ENCODE measurements at regions of chr4 and their contacts with region 1.

Region 1: DNA sequence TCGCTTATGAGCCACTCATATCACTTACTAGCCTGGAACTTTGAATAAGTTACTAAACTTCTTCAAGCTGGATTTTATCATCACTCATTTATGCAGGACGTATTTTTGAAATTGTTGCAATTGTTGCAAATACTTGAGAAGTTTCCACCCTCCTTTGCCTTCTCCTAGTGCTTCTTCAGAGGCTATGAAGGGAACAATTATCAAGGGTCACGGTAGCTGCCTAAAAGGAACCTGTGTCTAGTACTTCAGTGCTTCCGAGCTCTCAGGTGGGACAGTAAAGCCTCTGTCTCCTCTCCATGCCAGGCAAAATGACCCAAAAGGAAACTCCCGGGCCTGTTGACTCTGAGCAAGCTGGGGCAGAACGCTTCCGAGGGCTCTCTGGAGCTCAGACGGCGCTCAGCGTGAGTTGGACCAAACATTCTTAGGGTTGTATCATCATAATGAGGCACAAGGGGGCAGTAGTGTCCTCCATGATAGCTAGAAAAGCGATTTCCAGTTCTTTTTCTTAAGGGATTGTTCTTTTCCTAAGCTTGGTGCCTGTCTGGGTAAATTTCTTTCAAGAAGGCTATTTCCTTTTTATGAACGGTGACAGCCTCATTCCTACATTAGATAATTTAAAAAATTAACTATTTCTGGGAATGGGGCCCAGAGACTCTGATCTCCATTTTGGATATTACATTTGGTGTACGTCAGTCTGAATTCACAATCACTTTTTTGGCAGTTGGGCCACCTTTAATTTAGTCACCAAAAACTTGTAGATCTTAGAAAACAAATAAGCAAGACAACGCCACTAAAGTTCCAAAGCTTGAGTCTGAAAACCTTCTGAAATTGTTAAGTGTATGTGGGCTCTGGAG is 73.1 kb downstream of the PACRGL start:
- DNase-seq: peak; percentile 81
- H3K4me3 ChIP-seq: no peak overlapping the region
- H3K27ac ChIP-seq: peak overlapping the region; percentile 1
- H3K4me1 ChIP-seq: peaks cover 15% of the 10 kb centered on the region
- H3K27me3 ChIP-seq: no peaks in the 10 kb centered on the region
- CTCF ChIP-seq: peak; percentile 63 to 72
- POLR2A ChIP-seq: no peak

Region 2: DNA sequence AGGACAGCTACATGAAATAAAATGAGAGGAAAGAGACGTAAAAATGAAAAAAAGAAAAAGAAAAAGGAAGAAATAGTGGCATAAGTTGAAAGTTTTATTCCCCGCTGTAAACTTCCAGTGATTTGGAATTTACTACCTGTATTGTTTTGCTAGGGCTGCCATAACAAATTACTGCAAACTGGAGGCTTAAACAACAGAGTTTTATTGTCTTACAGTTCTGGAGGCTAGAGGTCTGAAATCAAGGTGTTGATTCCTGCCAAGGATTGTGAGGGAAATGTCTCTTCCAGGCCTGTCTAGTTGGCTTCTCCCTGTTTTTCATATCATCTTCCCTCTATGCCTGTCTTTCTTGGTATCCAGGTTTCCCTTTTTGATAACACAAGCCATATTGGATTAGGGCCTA is 192.5 kb before region 1 on chr4:
- CTCF ChIA-PET with region 1: no interaction called
- POLR2A ChIA-PET with region 1: no interaction called
- dilution Hi-C with region 1: no loop called
- intact Hi-C with region 1: no loop called
- DNase-seq: no peak
- H3K4me3 ChIP-seq: no peak overlapping the region
- H3K27ac ChIP-seq: no peak overlapping the region
- H3K4me1 ChIP-seq: no peaks in the 10 kb centered on the region
- H3K27me3 ChIP-seq: no peaks in the 10 kb centered on the region
- CTCF ChIP-seq: no peak
- POLR2A ChIP-seq: no peak

Region 3: GRCh38 chr4:20723019-20723418 is 50.4 kb before region 1 on chr4:
- CTCF ChIA-PET with region 1: no interaction called
- POLR2A ChIA-PET with region 1: no interaction called
- dilution Hi-C with region 1: no loop called
- intact Hi-C with region 1: no loop called
- DNase-seq: no peak
- H3K4me3 ChIP-seq: no peak overlapping the region
- H3K27ac ChIP-seq: no peak overlapping the region
- H3K4me1 ChIP-seq: no peaks in the 10 kb centered on the region
- H3K27me3 ChIP-seq: no peaks in the 10 kb centered on the region
- CTCF ChIP-seq: no peak
- POLR2A ChIP-seq: no peak

Region 4: GRCh38 chr4:20787940-20788665 is 14.7 kb after region 1 on chr4:
- CTCF ChIA-PET with region 1: interaction called, 10 read pairs
- POLR2A ChIA-PET with region 1: interaction called, 3 read pairs
- dilution Hi-C with region 1: no loop called
- intact Hi-C with region 1: no loop called
- DNase-seq: no peak
- H3K4me3 ChIP-seq: no peak overlapping the region
- H3K27ac ChIP-seq: no peak overlapping the region
- H3K4me1 ChIP-seq: no peaks in the 10 kb centered on the region
- H3K27me3 ChIP-seq: no peaks in the 10 kb centered on the region
- CTCF ChIP-seq: no peak
- POLR2A ChIP-seq: no peak

Region 5: DNA sequence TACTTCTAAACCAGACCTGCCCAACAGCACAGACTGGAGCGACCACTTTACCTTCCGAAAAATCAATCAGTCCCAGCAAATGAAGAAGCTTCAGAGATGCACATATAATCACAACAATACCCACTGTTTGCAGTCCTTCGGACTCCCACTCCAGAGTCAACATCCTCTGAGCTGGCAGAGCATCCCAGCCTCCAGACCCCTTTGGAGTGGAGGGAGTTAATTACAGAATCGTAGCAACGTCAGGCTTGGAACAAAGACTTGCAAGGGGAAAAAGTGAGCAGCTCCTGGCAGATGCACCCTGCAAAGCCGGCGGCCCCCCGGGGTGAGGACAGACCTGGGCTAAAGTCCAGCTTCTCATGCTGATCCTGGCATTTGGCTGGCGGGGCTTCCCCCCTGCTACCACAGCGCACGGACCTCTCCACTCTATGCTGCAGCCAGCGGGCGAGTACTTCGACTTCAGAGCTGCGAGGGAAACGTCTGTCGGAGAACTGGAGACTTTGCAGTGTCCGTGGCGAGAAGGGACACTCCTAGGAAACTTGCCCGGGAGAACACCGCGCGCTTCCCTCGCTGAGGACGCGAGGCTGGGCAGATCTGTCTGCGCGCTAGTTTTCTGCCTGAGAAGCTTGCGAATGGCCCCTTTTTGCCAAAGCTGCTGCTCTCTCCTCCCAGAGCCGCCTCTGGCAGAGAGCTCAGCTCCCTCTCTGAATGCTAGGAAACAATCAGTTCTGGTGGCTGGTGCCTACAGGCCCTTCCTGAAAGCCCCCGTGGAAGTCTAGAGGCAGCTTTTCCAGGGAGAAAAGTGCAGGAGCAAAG is 210.6 kb after region 1 on chr4:
- CTCF ChIA-PET with region 1: interaction called, 12 read pairs
- POLR2A ChIA-PET with region 1: no interaction called
- dilution Hi-C with region 1: no loop called
- intact Hi-C with region 1: no loop called
- DNase-seq: peak; percentile 38
- H3K4me3 ChIP-seq: peak overlapping the region in 2 of 3 experiments; percentile 28 to 40
- H3K27ac ChIP-seq: no peak overlapping the region
- H3K4me1 ChIP-seq: no peaks in the 10 kb centered on the region
- H3K27me3 ChIP-seq: no peaks in the 10 kb centered on the region
- CTCF ChIP-seq: no peak
- POLR2A ChIP-seq: no peak

Region 6: GRCh38 chr4:21113496-21114223 is 340.3 kb after region 1 on chr4:
- CTCF ChIA-PET with region 1: interaction called, 27 read pairs
- POLR2A ChIA-PET with region 1: no interaction called
- dilution Hi-C with region 1: no loop called
- intact Hi-C with region 1: loop called (anchors 1 kb)
- DNase-seq: peak; percentile 84
- H3K4me3 ChIP-seq: no peak overlapping the region
- H3K27ac ChIP-seq: peak overlapping the region; percentile 94
- H3K4me1 ChIP-seq: peaks cover 22% of the 10 kb centered on the region
- H3K27me3 ChIP-seq: no peaks in the 10 kb centered on the region
- CTCF ChIP-seq: no peak
- POLR2A ChIP-seq: no peak

Region 7: DNA sequence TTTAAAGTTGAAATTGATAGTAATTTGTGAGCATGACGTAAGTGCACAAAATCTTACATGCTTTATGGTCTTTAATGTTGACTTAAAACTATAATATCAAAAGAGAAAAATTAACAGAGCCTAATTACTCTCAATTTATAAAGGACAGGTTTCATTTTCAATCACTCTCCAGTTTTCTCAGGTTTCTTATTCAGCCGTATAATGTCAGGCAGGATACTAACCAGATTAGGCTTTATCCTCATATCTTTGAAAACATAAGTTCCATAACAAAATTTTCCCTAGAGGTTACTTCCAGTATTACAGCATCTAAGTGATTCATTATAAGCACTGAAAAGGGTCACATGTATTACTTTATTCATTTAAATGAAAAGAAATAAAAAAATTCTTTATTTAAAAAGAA is 419.0 kb after region 1 on chr4:
- CTCF ChIA-PET with region 1: interaction called, 5 read pairs
- POLR2A ChIA-PET with region 1: no interaction called
- dilution Hi-C with region 1: no loop called
- intact Hi-C with region 1: loop called (anchors 5 kb)
- DNase-seq: no peak
- H3K4me3 ChIP-seq: no peak overlapping the region
- H3K27ac ChIP-seq: no peak overlapping the region
- H3K4me1 ChIP-seq: no peaks in the 10 kb centered on the region
- H3K27me3 ChIP-seq: no peaks in the 10 kb centered on the region
- CTCF ChIP-seq: no peak
- POLR2A ChIP-seq: no peak

Region 8: GRCh38 chr4:21512353-21512752 is 739.0 kb after region 1 on chr4:
- CTCF ChIA-PET with region 1: interaction called, 20 read pairs
- POLR2A ChIA-PET with region 1: no interaction called
- dilution Hi-C with region 1: no loop called
- intact Hi-C with region 1: loop called (anchors 1 kb)
- DNase-seq: peak; percentile 71
- H3K4me3 ChIP-seq: no peak overlapping the region
- H3K27ac ChIP-seq: no peak overlapping the region
- H3K4me1 ChIP-seq: no peaks in the 10 kb centered on the region
- H3K27me3 ChIP-seq: peaks cover 34 to 55% of the 10 kb centered on the region in 2 experiments
- CTCF ChIP-seq: peak; percentile 15 to 17
- POLR2A ChIP-seq: no peak

Region 9: GRCh38 chr4:22410645-22411247 is 1637.4 kb after region 1 on chr4:
- CTCF ChIA-PET with region 1: no interaction called
- POLR2A ChIA-PET with region 1: no interaction called
- dilution Hi-C with region 1: no loop called
- intact Hi-C with region 1: no loop called
- DNase-seq: peak; percentile 36
- H3K4me3 ChIP-seq: no peak overlapping the region
- H3K27ac ChIP-seq: no peak overlapping the region
- H3K4me1 ChIP-seq: no peaks in the 10 kb centered on the region
- H3K27me3 ChIP-seq: no peaks in the 10 kb centered on the region
- CTCF ChIP-seq: peak; percentile 12 to 27
- POLR2A ChIP-seq: no peak

Measured in endothelial cell of umbilical vein (primary cell).